HAP-1 (cell line): ENCODE measurements at regions of chrX and their contacts with region 1.

Region 1: GRCh38 chrX:101136235-101136634 is 38.2 kb downstream of the CENPI start:
- DNase-seq: no peak
- H3K4me3 ChIP-seq: no peak overlapping the region
- H3K4me1 ChIP-seq: no peaks in the 10 kb centered on the region
- H3K27me3 ChIP-seq: no peaks in the 10 kb centered on the region

Region 2: GRCh38 chrX:101287402-101287801 is 151.2 kb after region 1 on chrX:
- in situ Hi-C with region 1: loop called (anchors 10 kb)
- DNase-seq: peak; percentile 62 to 64
- H3K4me3 ChIP-seq: no peak overlapping the region
- H3K4me1 ChIP-seq: 0 out of 2 replicates have a peak, but pooled peaks cover 6% of the 10 kb centered on the region
- H3K27me3 ChIP-seq: no peaks in the 10 kb centered on the region